Endothelial cell of umbilical vein (primary cell): ENCODE measurements at regions of chr1 and their contacts with region 1.

Region 1: DNA sequence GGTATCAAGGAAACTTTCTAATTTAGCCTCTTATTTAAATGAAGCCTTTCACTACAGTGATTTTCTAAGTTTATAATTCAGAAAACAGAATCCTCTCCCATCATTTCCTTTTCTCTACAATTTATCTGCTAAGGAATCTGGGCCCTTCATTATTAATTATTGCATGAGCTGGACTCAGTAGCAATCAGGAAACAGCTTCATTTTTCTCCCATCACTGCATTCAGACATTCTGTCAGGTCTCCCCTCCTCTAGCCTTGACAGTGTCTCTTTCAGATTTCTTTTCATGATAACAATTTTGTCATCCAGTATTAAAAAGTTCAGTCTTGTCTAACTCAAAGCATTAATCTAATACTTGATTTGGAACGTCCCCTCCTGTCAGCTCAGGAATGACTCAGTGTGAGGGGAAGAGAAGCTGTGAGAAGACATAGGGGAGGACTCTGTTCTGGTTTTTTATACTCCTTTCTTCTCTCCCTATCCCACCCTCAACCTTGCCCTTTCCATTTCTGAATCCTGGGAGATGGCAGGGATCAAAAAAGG is 28.1 kb downstream of the SLC44A5 start:
- DNase-seq: peak; percentile 52
- H3K4me3 ChIP-seq: no peak overlapping the region
- H3K27ac ChIP-seq: no peak overlapping the region
- H3K4me1 ChIP-seq: peaks cover 28% of the 10 kb centered on the region
- H3K27me3 ChIP-seq: no peaks in the 10 kb centered on the region
- CTCF ChIP-seq: peak in 1 of 2 donors; percentile 19
- POLR2A ChIP-seq: no peak

Region 2: GRCh38 chr1:75233302-75233929 is 349.4 kb before region 1 on chr1:
- CTCF ChIA-PET with region 1: interaction called, 42 read pairs
- POLR2A ChIA-PET with region 1: no interaction called
- dilution Hi-C with region 1: no loop called
- intact Hi-C with region 1: loop called (anchors 1 kb)
- DNase-seq: peak; percentile 66
- H3K4me3 ChIP-seq: no peak overlapping the region
- H3K27ac ChIP-seq: no peak overlapping the region
- H3K4me1 ChIP-seq: peaks cover 11% of the 10 kb centered on the region
- H3K27me3 ChIP-seq: no peaks in the 10 kb centered on the region
- CTCF ChIP-seq: peak; percentile 43 to 52
- POLR2A ChIP-seq: no peak

Region 3: DNA sequence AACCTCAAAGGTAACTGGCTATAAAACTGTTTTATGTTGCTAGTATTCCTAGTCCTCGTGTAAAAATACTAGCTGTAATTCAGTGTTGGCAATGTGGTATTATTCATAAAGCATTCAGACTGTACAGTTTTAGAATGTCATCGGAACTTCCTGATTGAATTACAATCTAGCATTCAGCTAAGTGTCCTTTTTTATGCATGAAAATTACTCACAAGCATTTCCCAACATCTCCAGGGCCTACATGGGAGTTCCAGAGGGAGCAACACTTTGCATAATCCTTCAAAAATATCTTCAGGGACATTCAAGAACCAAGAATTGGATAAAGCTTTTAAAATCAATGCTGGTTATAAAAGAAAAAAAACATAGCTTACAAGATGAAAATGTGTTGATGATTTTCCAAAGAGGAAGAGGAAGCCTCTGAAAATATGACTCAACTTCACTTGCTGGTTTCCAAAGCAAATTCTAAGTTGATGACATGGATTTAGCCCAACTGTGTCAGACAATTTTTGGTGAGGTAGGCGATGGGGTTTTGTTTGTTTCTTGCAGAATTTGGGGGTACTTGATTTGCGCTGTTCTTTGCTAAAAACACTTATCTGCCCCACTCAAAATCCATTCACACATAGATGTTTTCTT is 109.7 kb before region 1 on chr1:
- CTCF ChIA-PET with region 1: interaction called, 3 read pairs
- POLR2A ChIA-PET with region 1: no interaction called
- dilution Hi-C with region 1: no loop called
- intact Hi-C with region 1: loop called (anchors 1 kb)
- DNase-seq: peak; percentile 80
- H3K4me3 ChIP-seq: no peak overlapping the region
- H3K27ac ChIP-seq: peak overlapping the region; percentile 59
- H3K4me1 ChIP-seq: peaks cover 23% of the 10 kb centered on the region
- H3K27me3 ChIP-seq: no peaks in the 10 kb centered on the region
- CTCF ChIP-seq: no peak
- POLR2A ChIP-seq: no peak

Region 4: DNA sequence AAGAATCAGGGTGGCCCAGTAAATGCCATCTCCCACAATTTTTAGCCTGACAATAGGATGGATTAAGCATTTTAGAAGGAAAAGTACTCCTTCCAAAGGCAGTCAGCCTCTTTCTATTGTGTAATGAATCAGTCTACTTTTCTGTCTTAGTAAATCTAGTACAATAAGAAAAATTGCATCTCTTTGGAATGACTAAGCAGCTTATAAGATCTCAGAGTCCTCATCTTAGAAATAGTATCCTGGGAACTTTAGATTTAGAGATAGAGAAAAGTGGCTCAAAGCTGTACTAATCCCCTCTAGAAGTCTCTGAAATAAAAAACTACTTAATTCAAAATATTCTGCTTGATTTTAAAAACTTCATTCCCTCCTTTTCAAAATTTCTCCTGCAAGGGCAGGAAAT is 53.3 kb before region 1 on chr1:
- CTCF ChIA-PET with region 1: interaction called, 4 read pairs
- POLR2A ChIA-PET with region 1: no interaction called
- dilution Hi-C with region 1: no loop called
- intact Hi-C with region 1: loop called (anchors 1 kb)
- DNase-seq: peak; percentile 40
- H3K4me3 ChIP-seq: no peak overlapping the region
- H3K27ac ChIP-seq: no peak overlapping the region
- H3K4me1 ChIP-seq: peaks cover 29% of the 10 kb centered on the region
- H3K27me3 ChIP-seq: no peaks in the 10 kb centered on the region
- CTCF ChIP-seq: no peak
- POLR2A ChIP-seq: no peak

Region 5: DNA sequence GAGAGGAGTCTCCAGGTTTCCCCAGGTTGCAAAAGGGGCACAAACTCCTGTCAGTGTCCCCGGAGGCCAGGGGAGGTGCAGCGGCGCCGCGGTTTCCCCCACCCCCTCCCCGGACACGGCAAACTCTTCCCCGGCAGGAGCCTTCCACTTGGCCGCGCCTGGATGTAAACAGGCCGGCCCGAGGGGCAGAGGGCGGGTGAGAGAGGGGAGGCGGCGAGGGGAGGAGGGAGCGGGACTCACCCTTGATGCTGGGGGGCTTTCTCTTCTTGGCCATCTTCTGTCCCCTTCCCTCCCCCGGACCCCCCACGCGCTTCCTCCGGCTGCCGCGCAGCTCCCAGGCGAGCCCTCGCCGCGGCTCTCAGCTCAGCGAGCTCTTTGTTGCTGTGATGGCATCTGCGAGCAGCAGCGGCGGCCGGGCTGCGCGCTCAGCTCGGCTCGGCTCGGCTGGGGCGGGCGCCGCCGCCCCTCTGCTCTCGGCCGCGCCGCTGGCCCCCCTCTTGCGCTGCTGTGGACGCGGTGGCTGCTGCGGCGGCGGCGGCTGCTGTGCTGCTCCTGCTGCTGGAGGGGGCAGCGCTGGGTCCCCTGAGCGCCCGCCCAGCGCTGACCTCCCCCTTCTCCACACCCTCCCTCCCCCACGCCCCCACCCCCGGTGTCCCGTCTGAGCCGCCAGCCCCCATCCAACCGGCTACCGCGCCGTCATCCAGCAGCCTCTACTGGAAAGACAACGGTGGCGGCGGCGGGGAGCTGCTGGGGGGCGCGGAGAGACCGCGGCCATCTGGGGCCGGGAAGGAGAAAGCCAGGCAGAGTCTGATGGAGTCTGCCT is 33.0 kb after region 1 on chr1:
- CTCF ChIA-PET with region 1: interaction called, 51 read pairs
- POLR2A ChIA-PET with region 1: no interaction called
- dilution Hi-C with region 1: no loop called
- intact Hi-C with region 1: no loop called
- DNase-seq: peak; percentile 74
- H3K4me3 ChIP-seq: peak overlapping the region; percentile 80 to 84 (median 82)
- H3K27ac ChIP-seq: no peak overlapping the region
- H3K4me1 ChIP-seq: peaks cover 12% of the 10 kb centered on the region
- H3K27me3 ChIP-seq: peaks cover 0 to 3% of the 10 kb centered on the region in 2 experiments
- CTCF ChIP-seq: no peak
- POLR2A ChIP-seq: no peak